Activated B cell treated with CpG ODN at 0.5 μM for 24 hours (primary cell): ENCODE measurements at regions of chrX and their contacts with region 1.

Region 1: GRCh38 chrX:100674705-100675104 is 30.7 kb downstream of the SRPX2 start:
- DNase-seq: no peak
- ATAC-seq: no peak
- H3K4me3 Mint-ChIP-seq: no peak overlapping the region
- H3K27ac Mint-ChIP-seq: no peak overlapping the region
- H3K4me1 Mint-ChIP-seq: peaks cover 15% of the 10 kb centered on the region
- H3K27me3 Mint-ChIP-seq: no peaks in the 10 kb centered on the region
- CTCF ChIP-seq: no peak

Region 2: DNA sequence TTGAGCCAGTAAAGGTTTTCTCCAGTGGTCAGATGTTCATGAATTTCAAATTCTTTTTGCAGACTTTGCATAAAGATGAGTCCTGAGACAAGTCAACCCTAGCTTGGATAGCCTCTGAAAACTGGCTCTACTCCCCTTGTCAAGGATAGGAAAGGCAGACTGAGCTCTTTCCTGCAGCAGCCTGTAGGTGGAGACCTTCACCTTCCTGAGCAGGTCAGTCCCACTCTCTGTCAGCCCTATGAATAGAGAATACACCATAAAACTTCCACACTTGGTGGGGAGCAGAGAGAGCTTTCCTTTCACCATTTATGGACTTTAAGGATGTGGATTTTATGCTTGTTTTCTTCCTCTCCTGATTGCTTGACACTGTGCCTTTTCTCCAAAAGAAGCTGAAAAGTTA is 306.5 kb before region 1 on chrX:
- CTCF ChIA-PET with region 1: no interaction called
- POLR2A ChIA-PET with region 1: no interaction called
- intact Hi-C with region 1: no loop called
- DNase-seq: no peak
- ATAC-seq: no peak
- H3K4me3 Mint-ChIP-seq: no peak overlapping the region
- H3K27ac Mint-ChIP-seq: no peak overlapping the region
- H3K4me1 Mint-ChIP-seq: no peaks in the 10 kb centered on the region
- H3K27me3 Mint-ChIP-seq: no peaks in the 10 kb centered on the region
- CTCF ChIP-seq: no peak

Region 3: GRCh38 chrX:100768679-100769338 is 94.1 kb after region 1 on chrX:
- CTCF ChIA-PET with region 1: interaction called, 19 read pairs
- POLR2A ChIA-PET with region 1: no interaction called
- intact Hi-C with region 1: no loop called
- DNase-seq: peak; percentile 68
- ATAC-seq: peak; percentile 96
- H3K4me3 Mint-ChIP-seq: no peak overlapping the region
- H3K27ac Mint-ChIP-seq: no peak overlapping the region
- H3K4me1 Mint-ChIP-seq: no peaks in the 10 kb centered on the region
- H3K27me3 Mint-ChIP-seq: no peaks in the 10 kb centered on the region
- CTCF ChIP-seq: no peak

Region 4: GRCh38 chrX:101287402-101287801 is 612.7 kb after region 1 on chrX:
- CTCF ChIA-PET with region 1: no interaction called
- POLR2A ChIA-PET with region 1: no interaction called
- intact Hi-C with region 1: loop called (anchors 5 kb)
- DNase-seq: no peak
- ATAC-seq: peak; percentile 57
- H3K4me3 Mint-ChIP-seq: no peak overlapping the region
- H3K27ac Mint-ChIP-seq: no peak overlapping the region
- H3K4me1 Mint-ChIP-seq: no peaks in the 10 kb centered on the region
- H3K27me3 Mint-ChIP-seq: peaks cover 1% of the 10 kb centered on the region
- CTCF ChIP-seq: no peak